Ascending aorta (tissue), 2 donors: ENCODE measurements at regions of chr10 and their contacts with region 1.

Region 1: DNA sequence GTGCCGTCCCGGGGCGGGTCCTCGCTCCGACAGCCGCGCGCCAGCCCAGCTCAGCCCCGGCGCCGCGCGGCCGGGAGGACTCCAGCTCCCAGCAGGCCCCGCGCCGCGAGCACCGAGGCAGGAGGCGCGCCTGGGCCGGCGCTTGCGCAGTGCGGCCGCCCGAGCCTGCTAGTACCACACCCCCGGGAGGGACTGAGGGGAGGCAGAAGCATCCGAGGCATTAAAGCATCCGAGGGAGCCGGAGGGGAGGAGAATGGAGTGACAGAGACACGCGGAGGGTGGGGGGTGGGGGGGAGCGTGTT is at the start of gene GRK5:
- DNase-seq: peak; percentile 91 to 98
- H3K4me3 ChIP-seq: peak within 1 kb of the TSS; percentile 91 to 99
- H3K27ac ChIP-seq: peak within 1 kb of the TSS; percentile 95 to 97
- H3K4me1 ChIP-seq: peaks cover 2 to 28% of the 10 kb centered on the region in 2 donors
- H3K27me3 ChIP-seq: no peaks in the 10 kb centered on the region
- CTCF ChIP-seq: no peak
- total RNA-seq, gene GRK5: 75.5 TPM

Region 2: GRCh38 chr10:119270762-119271366 is 63.5 kb after region 1 on chr10:
- intact Hi-C with region 1: loop called (anchors 2 kb)
- DNase-seq: peak in 1 of 2 donors; percentile 90
- H3K4me3 ChIP-seq: peak overlapping the region in 1 of 2 donors; percentile 47
- H3K27ac ChIP-seq: peak overlapping the region; percentile 76 to 90
- H3K4me1 ChIP-seq: peaks cover 24 to 35% of the 10 kb centered on the region in 2 donors
- H3K27me3 ChIP-seq: no peaks in the 10 kb centered on the region
- CTCF ChIP-seq: no peak

Region 3: DNA sequence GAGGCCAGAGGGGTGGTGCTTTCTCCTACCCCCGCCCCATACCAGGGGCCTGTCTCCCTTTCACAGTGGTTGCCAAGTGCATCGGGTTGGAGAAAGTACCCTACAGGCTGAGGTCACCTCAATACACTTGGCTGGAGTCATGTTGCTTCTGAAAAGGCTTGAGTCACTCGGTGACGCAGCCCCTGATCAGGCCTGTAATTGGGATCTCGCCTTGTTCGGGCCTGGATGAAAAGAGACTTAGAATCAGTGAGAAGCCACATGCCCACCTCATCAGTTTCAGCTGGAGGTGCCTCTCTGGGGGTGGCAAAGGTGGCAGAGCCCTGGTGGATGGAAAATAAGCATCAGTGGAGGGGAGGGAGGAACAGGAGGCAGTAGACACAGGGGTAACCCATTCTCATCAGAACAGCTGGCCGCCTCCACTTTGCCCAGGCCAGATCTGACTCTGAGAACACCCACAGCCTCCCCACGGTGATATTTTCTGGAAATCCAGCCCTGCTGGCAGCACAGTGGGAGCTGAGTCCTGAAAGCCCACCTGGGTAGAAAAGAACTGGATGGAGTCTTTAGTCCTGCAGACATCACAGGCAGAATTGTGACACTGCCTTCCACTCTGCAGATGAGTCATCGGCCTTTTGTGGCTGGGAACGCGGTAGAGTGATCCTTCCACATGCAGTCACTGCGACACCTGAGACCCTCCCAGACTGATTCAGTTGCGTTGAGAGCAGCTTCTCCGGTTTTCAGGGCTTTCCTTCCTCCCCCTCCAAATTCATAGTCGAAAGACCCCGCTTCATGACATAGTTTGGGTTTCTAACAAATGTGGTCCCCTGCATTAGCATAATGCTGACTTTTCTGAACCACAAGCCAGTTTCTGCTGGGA is 108.0 kb after region 1 on chr10:
- intact Hi-C with region 1: loop called (anchors 2 kb)
- DNase-seq: peak; percentile 75 to 95
- H3K4me3 ChIP-seq: no peak overlapping the region
- H3K27ac ChIP-seq: peak overlapping the region; percentile 86 to 95
- H3K4me1 ChIP-seq: peaks cover 33 to 87% of the 10 kb centered on the region in 2 donors
- H3K27me3 ChIP-seq: no peaks in the 10 kb centered on the region
- CTCF ChIP-seq: no peak

Region 4: DNA sequence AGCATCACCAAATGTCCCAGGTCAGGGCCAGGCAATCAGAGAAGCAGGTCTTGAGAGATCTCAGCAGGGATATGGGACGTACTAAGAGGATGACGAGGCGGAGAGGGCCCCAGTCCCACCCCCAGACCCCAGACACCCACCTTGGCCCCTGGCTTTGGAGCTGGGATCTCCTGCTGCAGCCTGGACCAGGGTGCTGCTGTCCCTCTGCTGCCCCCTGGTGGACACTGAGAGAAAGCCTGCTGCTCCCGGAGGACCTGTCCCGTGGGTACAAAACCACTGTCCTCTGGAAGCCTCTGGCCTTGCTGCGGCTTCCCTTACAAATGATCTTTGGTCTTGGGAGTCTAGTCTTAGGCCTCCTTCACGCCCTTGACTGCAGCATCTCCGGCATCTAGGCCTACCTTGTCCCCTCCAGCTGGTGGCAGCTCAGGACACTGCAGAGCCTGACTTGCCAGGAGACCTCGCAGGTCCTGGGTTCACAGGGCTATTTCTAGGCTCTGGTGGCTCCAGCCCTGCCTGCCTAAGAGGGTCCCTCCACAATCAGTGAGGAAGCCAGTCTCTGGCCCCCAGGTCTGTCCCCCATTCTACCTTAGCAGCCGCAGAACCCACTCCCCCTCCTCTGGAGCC is 238.1 kb after region 1 on chr10:
- intact Hi-C with region 1: loop called (anchors 2 kb)
- DNase-seq: peak; percentile 51 to 91
- H3K4me3 ChIP-seq: no peak overlapping the region
- H3K27ac ChIP-seq: peak overlapping the region; percentile 29 to 40
- H3K4me1 ChIP-seq: peaks cover 19 to 28% of the 10 kb centered on the region in 2 donors
- H3K27me3 ChIP-seq: no peaks in the 10 kb centered on the region
- CTCF ChIP-seq: peak; percentile 87 to 97 (median 95)